Dendritic cell treated with granulocyte-macrophage colony-stimulating factor and Interleukin-4, amounts not matched to agents 40 ng/mL and 50 ng/mL, for 4 days (primary cell): ENCODE measurements at regions of chr1 and their contacts with region 1.

Region 1: DNA sequence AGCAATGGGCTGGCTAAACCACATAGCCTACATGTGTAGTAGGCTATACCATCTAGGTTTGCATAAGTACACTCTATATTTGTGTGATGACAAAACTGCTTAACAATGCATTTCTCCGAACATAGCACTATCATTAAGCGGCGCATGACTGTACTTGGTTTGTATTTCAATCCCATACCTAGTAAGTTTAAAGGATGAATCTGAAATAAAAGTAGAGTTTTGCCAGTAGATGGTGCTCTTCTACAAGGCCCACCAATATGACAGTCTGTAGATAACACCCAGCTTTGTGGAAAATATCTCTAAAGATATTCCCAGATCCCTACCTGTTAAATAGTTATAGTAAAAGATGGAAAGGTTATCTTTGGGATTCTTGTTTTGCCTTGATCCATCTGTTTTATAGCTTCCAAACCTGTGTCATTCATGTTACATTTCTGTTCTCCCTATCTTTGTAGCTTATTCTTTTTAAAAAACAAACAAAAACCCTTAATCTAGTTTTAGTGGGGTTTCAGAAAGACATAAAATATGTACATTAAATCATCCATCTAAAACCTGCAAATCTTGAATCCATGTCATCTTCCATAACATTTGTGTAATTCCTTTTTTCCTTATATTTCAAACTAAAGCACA is 33.9 kb upstream of the ASPM start:
- H3K4me3 Mint-ChIP-seq: no peak overlapping the region
- H3K27ac Mint-ChIP-seq: no peak overlapping the region
- H3K4me1 Mint-ChIP-seq: no peaks in the 10 kb centered on the region
- H3K27me3 Mint-ChIP-seq: no peaks in the 10 kb centered on the region

Region 2: DNA sequence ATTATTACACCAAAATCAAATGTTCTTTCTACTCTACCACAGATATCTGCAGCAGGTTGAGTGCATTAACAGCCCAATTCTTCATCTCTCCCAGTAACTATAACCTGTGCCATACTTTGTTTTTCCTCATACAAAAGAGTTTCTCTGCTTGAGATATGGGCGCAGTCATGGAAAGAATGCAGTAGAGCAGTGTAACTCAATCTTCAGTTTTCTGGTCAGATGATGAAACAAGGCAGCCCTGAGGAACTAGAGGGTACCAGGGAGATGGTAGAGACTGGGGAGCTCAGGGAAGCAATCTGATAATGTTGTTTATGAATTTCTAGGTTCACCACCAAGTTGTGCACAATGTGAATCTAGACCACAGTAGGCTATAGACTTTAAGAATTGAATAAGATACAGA is 73.5 kb before region 1 on chr1:
- intact Hi-C with region 1: no loop called
- H3K4me3 Mint-ChIP-seq: no peak overlapping the region
- H3K27ac Mint-ChIP-seq: no peak overlapping the region
- H3K4me1 Mint-ChIP-seq: no peaks in the 10 kb centered on the region
- H3K27me3 Mint-ChIP-seq: no peaks in the 10 kb centered on the region

Region 3: DNA sequence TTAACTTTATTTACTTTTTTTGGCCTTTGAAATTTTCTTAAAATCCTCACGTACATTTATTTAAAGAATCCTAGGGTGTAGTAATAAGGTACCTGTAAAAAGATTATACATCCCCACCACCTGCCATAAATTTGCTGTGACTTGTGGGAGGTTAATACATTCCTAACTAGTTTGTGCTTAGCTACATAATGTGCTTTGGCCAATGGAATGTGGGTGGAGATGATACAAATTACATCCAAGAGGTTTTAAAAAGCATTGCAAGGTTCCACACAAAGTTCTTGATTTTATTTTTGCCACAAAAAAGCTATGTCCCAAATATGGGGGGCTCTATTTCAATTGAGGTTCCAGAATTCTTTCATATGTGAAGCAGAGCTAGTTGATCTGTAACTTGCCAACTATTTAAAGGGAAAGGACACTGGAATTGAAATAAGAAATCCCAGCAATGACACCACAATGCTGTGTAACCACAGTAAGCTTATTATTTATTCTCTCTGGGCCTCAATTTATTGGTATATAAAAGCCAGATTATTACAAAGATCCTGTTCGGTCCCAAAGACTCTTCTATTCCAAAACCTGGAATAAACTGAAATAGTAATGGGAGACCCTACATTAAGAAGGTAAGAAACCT is 49.6 kb before region 1 on chr1:
- intact Hi-C with region 1: no loop called
- H3K4me3 Mint-ChIP-seq: no peak overlapping the region
- H3K27ac Mint-ChIP-seq: no peak overlapping the region
- H3K4me1 Mint-ChIP-seq: no peaks in the 10 kb centered on the region
- H3K27me3 Mint-ChIP-seq: no peaks in the 10 kb centered on the region

Region 4: DNA sequence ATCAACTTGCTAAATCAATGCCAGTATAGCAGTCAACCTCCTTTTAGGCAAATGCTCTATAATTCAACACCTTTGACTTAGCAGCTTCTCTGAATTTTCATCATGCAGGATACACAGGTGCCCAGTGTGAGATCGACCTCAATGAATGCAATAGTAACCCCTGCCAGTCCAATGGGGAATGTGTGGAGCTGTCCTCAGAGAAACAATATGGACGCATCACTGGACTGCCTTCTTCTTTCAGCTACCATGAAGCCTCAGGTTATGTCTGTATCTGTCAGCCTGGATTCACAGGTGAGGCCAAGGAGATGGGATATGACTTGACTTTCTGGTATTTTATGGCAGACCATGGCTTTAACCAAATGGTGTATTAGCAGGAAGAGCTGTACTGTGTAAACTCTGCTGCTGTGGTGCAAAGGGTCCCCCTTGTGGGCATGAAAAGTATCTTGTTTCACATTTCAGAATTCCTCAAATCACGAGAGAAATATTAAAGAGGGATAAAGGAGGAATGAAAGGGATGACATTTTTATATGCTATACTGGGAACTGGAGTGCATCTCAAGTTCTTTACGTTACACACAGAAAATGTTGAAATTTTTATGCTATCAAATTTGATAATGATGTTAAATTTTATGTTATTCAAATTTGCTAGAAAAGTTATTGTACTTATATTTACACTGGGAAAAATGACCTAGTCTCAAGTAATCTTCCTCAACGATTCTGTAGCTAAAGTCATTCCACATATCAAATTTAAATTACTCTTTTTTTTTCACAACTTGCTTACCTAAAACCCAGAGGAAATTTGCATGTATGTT is 176.6 kb after region 1 on chr1:
- intact Hi-C with region 1: loop called (anchors 1 kb)
- H3K4me3 Mint-ChIP-seq: no peak overlapping the region
- H3K27ac Mint-ChIP-seq: no peak overlapping the region
- H3K4me1 Mint-ChIP-seq: no peaks in the 10 kb centered on the region
- H3K27me3 Mint-ChIP-seq: no peaks in the 10 kb centered on the region